GM18951 (cell line): ENCODE measurements at regions of chr3 and their contacts with region 1.

Region 1: DNA sequence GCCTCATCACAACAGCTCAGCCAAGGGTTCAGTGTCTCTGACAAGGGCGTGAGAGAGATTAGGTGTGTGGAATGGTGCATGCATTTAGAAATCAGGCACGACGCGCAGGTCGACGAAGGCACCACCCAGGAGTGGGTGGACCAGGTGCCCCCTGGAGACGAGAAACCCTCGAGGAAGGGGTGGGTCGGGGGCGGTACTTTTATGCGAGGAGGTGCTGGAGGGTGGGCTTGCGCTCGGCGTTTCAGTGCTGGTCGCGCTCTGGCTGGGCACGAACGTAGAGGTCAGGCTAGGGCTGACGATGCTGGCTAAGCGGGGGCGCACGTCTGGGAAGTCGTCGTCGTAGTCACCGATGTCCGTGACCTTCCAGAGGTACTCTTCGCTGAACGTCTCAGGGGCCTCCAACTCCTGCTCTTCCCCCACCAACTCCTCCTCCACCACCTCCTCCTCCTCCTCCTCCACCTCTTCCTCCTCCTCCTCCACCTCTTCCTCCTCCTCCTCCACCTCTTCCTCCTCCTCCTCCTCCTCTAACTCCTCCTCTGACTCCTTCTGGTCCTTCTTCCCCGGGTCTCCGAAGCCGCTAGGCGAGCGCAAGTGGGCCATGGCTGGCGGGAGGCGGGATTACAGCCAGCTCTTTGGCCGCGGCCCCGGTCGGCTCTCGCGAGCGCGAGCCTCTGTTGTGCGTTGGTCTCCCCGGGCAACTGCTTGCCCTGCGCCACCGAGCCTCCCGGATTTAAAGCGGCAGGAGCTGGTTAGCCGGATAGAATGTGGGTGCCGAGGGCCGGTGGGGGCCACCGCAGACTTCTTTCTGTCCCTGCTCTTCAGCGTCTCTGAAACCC is at the start of gene ERICH6:
- POLR2A ChIP-seq: peak; percentile 71

Region 2: GRCh38 chr3:150365132-150365604 is 338.3 kb before region 1 on chr3:
- in situ Hi-C with region 1: no loop called
- POLR2A ChIP-seq: no peak

Region 3: DNA sequence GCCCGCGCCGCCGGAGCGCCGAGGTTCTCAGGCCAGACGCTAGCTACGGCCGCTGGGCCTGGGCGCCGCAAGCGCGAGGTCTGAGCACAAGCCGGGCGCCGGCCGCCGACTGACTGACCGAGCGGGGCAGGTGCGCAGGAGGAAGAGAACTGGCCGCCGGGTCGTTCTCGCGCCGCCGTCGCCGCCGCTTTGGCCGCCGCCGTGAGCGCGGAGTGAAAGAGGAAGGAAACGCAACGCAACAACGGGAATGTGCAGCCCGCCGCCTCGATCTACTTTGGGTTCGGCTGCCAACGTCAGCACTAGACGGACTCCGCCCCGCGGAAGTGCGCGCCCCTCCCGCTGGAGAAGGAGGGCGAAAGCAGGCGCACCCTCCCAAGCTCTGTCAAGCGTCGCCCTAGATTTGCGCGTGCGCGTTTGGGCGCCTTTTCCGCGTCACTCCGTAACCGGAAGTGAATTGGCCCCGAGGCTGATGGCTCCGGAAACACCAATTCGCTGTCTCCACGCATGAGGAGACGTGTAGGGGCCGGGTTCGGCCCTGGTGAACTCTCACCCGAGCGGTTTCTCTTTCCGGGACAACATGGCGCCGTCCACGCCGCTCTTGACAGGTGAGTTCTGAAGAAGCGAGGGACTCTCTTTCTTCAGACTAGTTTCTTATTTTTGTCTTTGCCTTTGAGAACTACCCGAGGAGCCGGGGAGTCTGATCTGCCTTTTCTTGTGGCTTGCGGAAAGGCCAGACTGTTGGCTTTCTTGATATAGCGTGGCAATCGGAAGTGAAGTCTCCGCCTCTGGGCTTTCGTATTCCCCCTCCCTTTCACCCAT is 157.1 kb before region 1 on chr3 and contains the starts of genes EIF2A and SERP1:
- in situ Hi-C with region 1: loop called (anchors 25 kb)
- POLR2A ChIP-seq: peak; percentile 96